ENCODE measurements at regions of chr3 and their contacts with region 1.

Region 1: DNA sequence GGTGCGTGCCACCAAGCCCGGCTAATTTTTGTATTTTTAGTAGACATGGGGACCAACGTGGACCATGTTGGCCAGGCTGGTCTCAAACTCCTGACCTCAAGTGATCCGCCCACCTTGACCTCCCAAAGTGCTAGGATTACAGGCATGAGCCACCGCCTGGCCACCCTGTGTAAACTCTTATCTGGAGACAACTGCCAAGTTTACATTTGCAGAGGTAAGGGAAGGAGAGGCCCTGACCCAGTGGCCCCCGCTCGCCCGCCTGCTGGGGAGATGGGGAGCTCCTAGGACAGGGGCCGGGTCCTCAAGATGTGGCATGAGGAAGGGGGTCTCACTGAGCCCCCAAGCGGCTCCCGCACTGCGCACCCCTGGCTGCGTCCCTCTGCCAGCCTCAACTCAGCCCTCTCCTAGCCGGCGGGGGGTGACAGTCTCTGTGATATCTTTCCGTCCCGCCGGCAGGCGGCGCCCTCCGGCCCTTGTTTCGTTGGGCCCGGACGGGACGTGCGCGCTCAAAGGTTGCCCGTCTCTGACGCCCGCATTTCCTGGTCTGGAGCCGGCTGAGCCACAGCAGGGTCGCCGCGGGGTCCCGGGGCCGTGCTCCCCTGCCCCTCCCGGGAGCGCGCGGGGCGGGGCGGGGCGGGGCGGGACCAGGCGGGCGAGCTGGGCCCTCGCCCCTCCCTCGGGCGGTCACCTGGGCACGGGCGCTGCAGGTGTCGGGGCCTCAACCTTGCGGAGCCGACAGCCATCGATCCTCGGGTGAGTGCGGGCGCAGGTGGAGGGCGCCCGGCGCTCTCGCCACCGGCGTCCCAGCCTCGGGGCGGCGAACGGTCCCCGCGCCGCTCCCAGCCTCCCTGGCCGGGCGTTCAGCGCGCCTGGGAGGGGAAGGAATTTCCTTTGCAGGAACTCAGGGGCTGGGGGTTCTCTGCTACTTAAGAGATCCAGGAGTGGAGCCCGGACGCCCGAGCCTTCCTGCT is at the start of gene GPR160:
- DNase-seq: peak; percentile 88
- ATAC-seq: peak; percentile 77
- H3K4me3 Mint-ChIP-seq: peak within 1 kb of the TSS; percentile 93
- H3K27ac Mint-ChIP-seq: peak within 1 kb of the TSS; percentile 88
- H3K4me1 Mint-ChIP-seq: peaks cover 46% of the 10 kb centered on the region
- H3K27me3 Mint-ChIP-seq: no peaks in the 10 kb centered on the region
- CTCF ChIP-seq: peak; percentile 52
- total RNA-seq, gene GPR160: 63.2 and 65.5 TPM in 2 replicates

Region 2: DNA sequence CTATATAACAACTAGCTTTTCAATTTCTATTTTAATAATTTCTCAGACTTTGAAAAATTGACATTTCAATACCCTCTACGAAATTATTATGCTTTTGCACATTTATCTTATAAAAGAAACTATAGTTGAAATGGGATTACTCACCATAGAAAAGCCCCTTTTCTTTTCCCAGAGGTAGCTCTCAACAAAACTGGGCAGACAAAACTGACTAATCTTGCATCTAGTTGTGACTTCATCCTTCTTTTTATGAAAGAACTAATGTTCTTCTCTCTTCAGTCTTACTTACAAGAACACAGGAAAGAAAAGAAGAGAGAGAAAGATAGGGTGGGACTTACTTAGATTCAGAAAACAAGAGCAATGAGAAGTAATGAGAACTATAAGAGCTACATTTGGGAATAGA is 61.0 kb after region 1 on chr3:
- CTCF ChIA-PET with region 1: no interaction called
- POLR2A ChIA-PET with region 1: interaction called, 4 read pairs
- intact Hi-C with region 1: loop called (anchors 2 kb)
- DNase-seq: no peak
- ATAC-seq: no peak
- H3K4me3 Mint-ChIP-seq: no peak overlapping the region
- H3K27ac Mint-ChIP-seq: peak overlapping the region; percentile 43
- H3K4me1 Mint-ChIP-seq: peaks cover 9% of the 10 kb centered on the region
- H3K27me3 Mint-ChIP-seq: no peaks in the 10 kb centered on the region
- CTCF ChIP-seq: no peak

Region 3: GRCh38 chr3:170811928-170812591 is 774.3 kb after region 1 on chr3:
- CTCF ChIA-PET with region 1: no interaction called
- POLR2A ChIA-PET with region 1: no interaction called
- intact Hi-C with region 1: loop called (anchors 1 kb)
- DNase-seq: peak; percentile 30
- ATAC-seq: peak; percentile 97
- H3K4me3 Mint-ChIP-seq: no peak overlapping the region
- H3K27ac Mint-ChIP-seq: no peak overlapping the region
- H3K4me1 Mint-ChIP-seq: no peaks in the 10 kb centered on the region
- H3K27me3 Mint-ChIP-seq: no peaks in the 10 kb centered on the region
- CTCF ChIP-seq: peak; percentile 84

Measured in activated B cell treated with CpG ODN at 0.5 μM for 24 hours (primary cell).